Cardiac septum (tissue), 1 donor: ENCODE measurements at regions of chr5 and their contacts with region 1.

Region 1: GRCh38 chr5:151164686-151165392 is 7.3 kb upstream of the ANXA6 start:
- DNase-seq: peak; percentile 83

Region 2: GRCh38 chr5:150801117-150801927 is 363.5 kb before region 1 on chr5:
- intact Hi-C with region 1: loop called (anchors 10 kb)
- DNase-seq: no peak

Region 3: DNA sequence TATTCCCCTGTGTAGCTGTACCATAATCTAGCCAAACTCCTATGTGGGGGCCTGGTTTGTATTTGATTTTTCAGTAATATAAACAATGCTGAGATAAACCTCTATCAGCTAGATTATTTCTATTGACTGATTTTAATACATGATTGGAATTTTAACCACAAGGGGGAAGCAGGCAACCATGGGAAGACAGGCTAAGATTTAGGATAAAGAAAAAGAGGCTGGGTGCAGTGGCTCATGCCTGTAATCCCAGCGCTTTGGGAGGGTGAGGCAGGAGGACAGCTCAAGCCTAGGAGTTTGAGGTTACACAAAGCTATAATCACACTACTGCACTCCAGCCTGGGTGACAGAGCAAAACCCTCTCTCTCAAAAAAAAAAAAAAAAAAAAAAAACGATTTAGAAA is 162.6 kb before region 1 on chr5:
- intact Hi-C with region 1: loop called (anchors 5 kb)
- DNase-seq: no peak

Region 4: DNA sequence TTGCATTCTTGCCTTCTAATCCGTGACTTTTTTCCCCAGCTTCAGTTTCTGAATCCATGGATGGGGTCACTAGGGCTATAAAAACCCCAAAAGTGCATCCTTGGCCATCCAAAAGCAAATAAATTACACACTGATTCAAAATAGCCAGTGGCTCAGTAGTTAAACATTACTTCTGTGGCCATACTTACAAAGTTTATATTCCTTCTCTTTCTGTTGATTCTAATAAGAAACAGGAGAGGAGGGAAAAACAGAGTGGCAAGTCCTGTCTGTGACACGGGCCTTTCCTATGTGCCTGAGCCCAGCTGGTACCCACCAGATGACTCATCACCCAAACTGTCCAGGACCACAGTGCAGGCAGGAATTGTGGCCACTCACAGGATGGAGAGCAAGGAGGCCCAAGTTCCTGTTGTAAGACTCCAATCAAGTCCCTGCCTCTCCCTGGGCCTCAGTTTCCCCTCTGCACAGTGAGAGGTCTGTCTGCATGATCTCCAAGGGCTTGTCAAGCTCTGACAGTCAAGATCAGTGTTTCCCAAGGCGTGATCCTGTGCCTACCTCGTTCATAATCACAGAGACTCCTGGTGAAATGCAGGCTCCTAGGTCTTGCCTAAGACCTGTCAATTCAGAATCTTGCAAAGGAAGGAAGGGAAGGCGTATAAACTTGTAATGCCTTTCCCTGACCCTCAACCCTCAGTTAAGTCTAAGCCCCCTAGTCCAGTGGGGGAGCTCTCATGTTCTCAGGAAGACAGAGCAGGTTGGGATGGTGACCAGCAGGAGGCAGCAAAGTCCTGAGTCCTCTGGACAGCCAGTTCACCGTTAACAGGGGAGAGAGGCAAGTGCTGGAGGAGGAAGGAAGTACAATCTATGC is 113.5 kb before region 1 on chr5:
- intact Hi-C with region 1: loop called (anchors 5 kb)
- DNase-seq: peak; percentile 88

Region 5: GRCh38 chr5:151126199-151126645 is 38.6 kb before region 1 on chr5:
- intact Hi-C with region 1: loop called (anchors 2 kb)
- DNase-seq: peak; percentile 92

Region 6: GRCh38 chr5:151523335-151523734 is 358.5 kb after region 1 on chr5:
- intact Hi-C with region 1: no loop called
- DNase-seq: no peak